CD8-positive, alpha-beta T cell (primary cell): ENCODE measurements at regions of chr20 and their contacts with region 1.

Region 1: GRCh38 chr20:48783533-48784272 is 44.1 kb downstream of the PREX1 start:
- DNase-seq: peak in 5 of 9 experiments; percentile 35 to 83 (median 57)
- ATAC-seq: peak; percentile 69
- H3K4me3 ChIP-seq: no peak overlapping the region
- H3K4me3 Mint-ChIP-seq: no peak overlapping the region
- H3K27ac ChIP-seq: peak overlapping the region; percentile 4 to 58
- H3K27ac Mint-ChIP-seq: no peak overlapping the region
- H3K4me1 ChIP-seq: peaks cover 68% of the 10 kb centered on the region
- H3K4me1 Mint-ChIP-seq: peaks cover 53% of the 10 kb centered on the region
- H3K27me3 ChIP-seq: no peaks in the 10 kb centered on the region
- H3K27me3 Mint-ChIP-seq: no peaks in the 10 kb centered on the region
- CTCF ChIP-seq: no peak

Region 2: GRCh38 chr20:48738399-48739304 is 45.1 kb before region 1 on chr20:
- CTCF ChIA-PET with region 1: no interaction called
- POLR2A ChIA-PET with region 1: no interaction called
- intact Hi-C with region 1: loop called in 1 of 2 experiments (anchors 5 kb)
- DNase-seq: peak in 6 of 9 experiments; percentile 39 to 72 (median 58)
- ATAC-seq: peak; percentile 78
- H3K4me3 ChIP-seq: no peak overlapping the region
- H3K4me3 Mint-ChIP-seq: peak overlapping the region; percentile 50
- H3K27ac ChIP-seq: peak overlapping the region in 1 of 2 experiments; percentile 55
- H3K27ac Mint-ChIP-seq: peak overlapping the region; percentile 89
- H3K4me1 ChIP-seq: peaks cover 61% of the 10 kb centered on the region
- H3K4me1 Mint-ChIP-seq: peaks cover 63% of the 10 kb centered on the region
- H3K27me3 ChIP-seq: no peaks in the 10 kb centered on the region
- H3K27me3 Mint-ChIP-seq: no peaks in the 10 kb centered on the region
- CTCF ChIP-seq: no peak

Region 3: DNA sequence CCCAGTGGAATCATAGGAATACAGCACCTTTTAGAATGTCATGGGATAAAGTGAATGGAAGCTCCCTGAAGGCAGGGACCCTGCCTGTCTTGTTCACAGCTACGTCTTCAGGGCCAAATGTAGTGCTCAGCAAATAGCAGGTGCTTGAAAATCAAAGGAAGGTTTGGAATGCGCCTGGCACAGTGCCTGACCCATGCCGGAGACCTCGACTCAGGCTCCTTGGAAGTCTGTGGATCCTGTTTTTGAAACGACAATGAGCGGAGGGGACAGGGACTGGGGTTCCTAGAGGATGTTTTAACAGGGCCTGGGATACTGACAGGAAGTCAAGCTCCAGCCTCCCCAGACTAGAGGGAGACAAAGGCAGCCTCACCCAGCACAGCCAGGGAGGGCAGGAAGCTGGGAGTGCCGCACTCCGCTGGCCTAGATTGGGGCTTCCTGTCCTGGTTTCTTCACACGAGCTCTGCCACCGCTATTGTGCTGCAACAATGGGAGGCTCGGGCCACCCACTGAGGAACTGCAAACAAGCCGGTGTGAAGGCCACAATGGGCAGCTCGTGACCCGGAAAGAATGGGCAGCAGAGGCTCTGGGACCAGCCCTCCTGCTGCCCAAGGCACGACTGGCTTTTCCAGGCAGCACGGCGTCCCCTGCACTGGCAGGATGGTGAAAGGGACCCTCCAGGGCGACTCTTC is 32.6 kb before region 1 on chr20:
- CTCF ChIA-PET with region 1: interaction called, 3 read pairs
- POLR2A ChIA-PET with region 1: no interaction called
- intact Hi-C with region 1: loop called in 1 of 2 experiments (anchors 2 kb)
- DNase-seq: peak; percentile 16 to 81 (median 58)
- ATAC-seq: peak; percentile 78
- H3K4me3 ChIP-seq: peak overlapping the region; percentile 27 to 32
- H3K4me3 Mint-ChIP-seq: peak overlapping the region; percentile 56
- H3K27ac ChIP-seq: peak overlapping the region; percentile 12 to 68
- H3K27ac Mint-ChIP-seq: peak overlapping the region; percentile 88
- H3K4me1 ChIP-seq: peaks cover 67% of the 10 kb centered on the region
- H3K4me1 Mint-ChIP-seq: peaks cover 77% of the 10 kb centered on the region
- H3K27me3 ChIP-seq: no peaks in the 10 kb centered on the region
- H3K27me3 Mint-ChIP-seq: no peaks in the 10 kb centered on the region
- CTCF ChIP-seq: no peak